Heart left ventricle (tissue), 16 donors: ENCODE measurements at regions of chr9 and their contacts with region 1.

Region 1: GRCh38 chr9:107340920-107341632 is 58.0 kb downstream of the RAD23B start:
- DNase-seq: peak; percentile 71 to 88 (median 76)
- ATAC-seq: peak; percentile 19 to 65 (median 54)
- H3K4me3 ChIP-seq: no peak overlapping the region
- H3K27ac ChIP-seq: no peak overlapping the region
- H3K4me1 ChIP-seq: peaks cover 0 to 36% (median 16%) of the 10 kb centered on the region in 12 donors
- H3K27me3 ChIP-seq: no peaks in the 10 kb centered on the region
- CTCF ChIP-seq: peak; percentile 70 to 93 (median 86)
- POLR2A ChIP-seq: no peak

Region 2: DNA sequence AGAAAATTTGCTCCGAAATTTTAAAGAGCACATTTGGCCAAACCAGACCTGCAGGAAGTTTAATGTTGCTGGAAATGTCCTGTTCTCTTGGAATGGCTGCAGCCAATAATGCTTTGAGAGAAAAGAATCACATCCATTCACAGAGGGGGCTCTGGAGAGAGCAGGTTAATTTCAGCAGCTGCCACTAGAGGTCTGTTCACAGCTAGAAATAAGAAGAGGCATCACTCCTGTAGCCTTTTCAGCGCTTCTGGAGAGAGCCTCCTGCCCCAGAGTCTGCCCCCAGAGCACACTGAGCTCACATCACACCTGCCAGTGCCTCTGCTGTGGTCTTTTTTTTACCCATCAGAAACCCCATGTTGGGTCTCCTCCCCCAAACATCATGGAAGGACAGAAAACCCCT is 182.8 kb before region 1 on chr9:
- intact Hi-C with region 1: loop called in 2 of 10 experiments (anchors 10 kb)
- DNase-seq: no peak
- ATAC-seq: peak in 3 of 4 donors; percentile 65 to 68 (median 66)
- H3K4me3 ChIP-seq: no peak overlapping the region
- H3K27ac ChIP-seq: no peak overlapping the region
- H3K4me1 ChIP-seq: no peaks in the 10 kb centered on the region
- H3K27me3 ChIP-seq: peaks cover 0 to 2% (median 0%) of the 10 kb centered on the region in 9 donors
- CTCF ChIP-seq: peak in 8 of 12 donors; percentile 25 to 49 (median 34)
- POLR2A ChIP-seq: no peak

Region 3: DNA sequence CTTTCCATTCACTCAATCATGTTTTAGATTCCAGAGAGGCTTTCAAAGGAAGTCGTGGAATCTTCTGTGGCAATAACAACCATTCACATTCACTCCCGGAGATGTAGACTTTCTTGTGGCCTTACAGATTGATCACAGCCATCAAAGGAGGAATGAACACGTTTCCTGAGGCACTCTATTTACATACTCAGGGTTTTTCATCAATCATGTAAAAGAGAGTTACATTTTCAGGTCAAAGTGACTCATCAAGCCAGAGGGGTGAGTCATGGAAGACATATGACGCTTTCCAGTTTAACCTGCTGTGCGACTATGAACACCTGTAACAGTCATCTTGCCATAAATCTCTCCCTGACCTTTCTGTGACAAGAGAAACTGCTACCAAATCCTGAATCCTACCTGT is 97.3 kb before region 1 on chr9:
- intact Hi-C with region 1: loop called in 7 of 10 experiments (anchors 2 to 5 kb)
- DNase-seq: no peak
- ATAC-seq: no peak
- H3K4me3 ChIP-seq: no peak overlapping the region
- H3K27ac ChIP-seq: no peak overlapping the region
- H3K4me1 ChIP-seq: peaks cover 0 to 4% (median 0%) of the 10 kb centered on the region in 12 donors
- H3K27me3 ChIP-seq: no peaks in the 10 kb centered on the region
- CTCF ChIP-seq: no peak
- POLR2A ChIP-seq: no peak

Region 4: GRCh38 chr9:107274953-107275422 is 66.1 kb before region 1 on chr9:
- intact Hi-C with region 1: loop called in 4 of 10 experiments (anchors 5 to 10 kb)
- DNase-seq: no peak
- ATAC-seq: peak in 3 of 4 donors; percentile 69 to 94 (median 71)
- H3K4me3 ChIP-seq: no peak overlapping the region
- H3K27ac ChIP-seq: peak overlapping the region in 1 of 12 donors; percentile 46
- H3K4me1 ChIP-seq: peaks cover 0 to 18% (median 5%) of the 10 kb centered on the region in 12 donors
- H3K27me3 ChIP-seq: peaks cover 0 to 4% (median 0%) of the 10 kb centered on the region in 9 donors
- CTCF ChIP-seq: no peak
- POLR2A ChIP-seq: no peak

Region 5: GRCh38 chr9:107282753-107283625 is 58.1 kb before region 1 on chr9 and contains the start of gene RAD23B:
- intact Hi-C with region 1: loop called in 4 of 10 experiments (anchors 5 to 10 kb)
- DNase-seq: peak; percentile 99 to 100 (median 99)
- ATAC-seq: peak; percentile 95 to 98 (median 97)
- H3K4me3 ChIP-seq: peak within 1 kb of the TSS; percentile 72 to 99 (median 90)
- H3K27ac ChIP-seq: peak within 1 kb of the TSS; percentile 97 to 100 (median 99)
- H3K4me1 ChIP-seq: peaks cover 0 to 43% (median 24%) of the 10 kb centered on the region in 12 donors
- H3K27me3 ChIP-seq: no peaks in the 10 kb centered on the region
- CTCF ChIP-seq: no peak
- POLR2A ChIP-seq: peak in 1 of 2 donors; percentile 86
- total RNA-seq, gene RAD23B: 84.4 to 144 (median 105) TPM